Transverse colon (tissue), 4 donors: ENCODE measurements at regions of chr3 and their contacts with region 1.

Region 1: GRCh38 chr3:129934234-129935123 is 40.0 kb upstream of the TRH start:
- DNase-seq: no peak
- H3K4me3 ChIP-seq: peak overlapping the region in 1 of 4 donors; percentile 9
- H3K27ac ChIP-seq: no peak overlapping the region
- H3K4me1 ChIP-seq: peaks cover 0 to 8% (median 2%) of the 10 kb centered on the region in 4 donors
- H3K27me3 ChIP-seq: no peaks in the 10 kb centered on the region
- CTCF ChIP-seq: peak; percentile 88 to 95 (median 92)
- EP300 ChIP-seq: no peak
- POLR2A ChIP-seq: no peak

Region 2: DNA sequence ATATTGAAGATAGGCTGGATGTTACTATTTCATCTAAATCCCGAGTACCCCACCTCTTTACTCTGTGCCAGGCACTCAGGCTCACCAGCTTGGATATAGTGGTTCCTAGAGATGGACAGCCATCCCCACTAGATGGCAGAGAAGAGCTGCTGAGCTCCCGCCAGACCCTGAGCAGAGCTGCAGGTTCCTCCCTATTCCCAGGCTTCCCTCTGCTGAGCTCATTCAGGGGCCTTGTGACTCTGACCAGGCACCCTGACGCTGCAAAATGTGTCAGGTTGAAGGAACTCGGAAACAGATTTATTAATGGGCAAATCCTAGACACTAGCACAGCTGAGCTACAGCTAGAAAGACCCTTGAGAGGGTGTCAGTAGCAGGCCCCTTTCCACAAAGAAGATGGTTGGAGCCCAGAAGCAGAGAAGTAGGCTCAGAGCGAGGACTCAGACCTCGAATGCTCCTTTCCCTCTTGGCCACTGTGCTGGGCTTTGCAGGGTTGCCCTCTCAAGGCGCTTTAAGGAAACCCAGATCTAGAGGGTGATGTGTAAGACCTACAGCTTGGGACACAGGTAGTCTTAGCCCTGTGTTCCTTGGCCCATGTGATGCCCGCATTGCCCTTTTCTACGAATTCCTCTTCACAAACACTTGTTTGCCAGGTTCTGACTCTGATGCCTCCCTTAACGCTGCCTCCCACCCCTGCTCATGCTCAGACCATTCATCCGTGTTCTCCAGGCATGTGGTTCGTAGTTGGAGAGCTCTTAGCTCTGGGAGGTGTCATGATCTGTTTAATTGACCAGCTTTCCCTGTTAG is 444.0 kb before region 1 on chr3:
- in situ Hi-C with region 1: loop called in 2 of 4 experiments (anchors 25 kb)
- intact Hi-C with region 1: loop called (anchors 10 kb)
- DNase-seq: peak; percentile 74
- H3K4me3 ChIP-seq: no peak overlapping the region
- H3K27ac ChIP-seq: peak overlapping the region; percentile 65 to 72 (median 69)
- H3K4me1 ChIP-seq: peaks cover 0 to 17% (median 6%) of the 10 kb centered on the region in 4 donors
- H3K27me3 ChIP-seq: no peaks in the 10 kb centered on the region
- CTCF ChIP-seq: peak; percentile 77 to 85 (median 78)
- EP300 ChIP-seq: no peak
- POLR2A ChIP-seq: no peak

Region 3: DNA sequence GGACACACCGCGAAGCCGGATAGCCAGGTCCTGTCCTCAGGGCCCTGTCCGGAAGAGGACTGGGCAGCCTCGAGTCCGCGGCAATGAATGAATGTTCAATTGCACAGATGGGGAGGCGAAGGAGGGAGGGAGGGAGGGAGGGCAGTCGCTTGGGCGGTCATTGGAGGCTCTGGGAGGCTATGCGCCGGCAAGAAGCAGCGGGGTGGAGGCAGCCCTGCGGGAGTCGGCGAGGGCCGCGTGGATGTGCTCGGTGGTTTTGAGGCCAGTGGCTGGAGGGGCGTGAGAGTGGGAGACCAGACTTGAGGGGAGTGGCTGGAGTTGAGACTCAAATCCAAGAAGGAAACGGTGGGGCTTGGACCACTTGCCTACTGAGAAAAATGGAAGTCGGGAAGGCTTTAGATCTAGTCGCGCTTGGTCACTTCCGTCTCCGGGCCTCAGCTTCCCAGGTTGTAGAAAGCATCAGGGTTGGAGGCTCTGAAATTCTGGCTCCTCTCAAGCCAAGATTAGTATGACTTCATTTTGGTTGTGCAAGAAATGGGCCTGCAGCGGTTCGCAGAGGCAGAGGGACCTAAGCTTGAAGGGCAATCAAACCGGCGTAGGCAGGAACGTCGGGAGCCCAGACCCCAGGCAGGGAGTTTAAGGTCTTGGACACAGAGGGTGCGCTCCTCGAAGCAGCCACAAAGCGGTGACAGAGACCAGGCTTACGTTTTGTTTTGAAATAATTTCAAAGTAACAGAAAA is 306.9 kb before region 1 on chr3:
- in situ Hi-C with region 1: loop called in 3 of 4 experiments (anchors 5 to 25 kb)
- intact Hi-C with region 1: loop called (anchors 10 kb)
- DNase-seq: peak; percentile 75
- H3K4me3 ChIP-seq: peak overlapping the region; percentile 50 to 77 (median 70)
- H3K27ac ChIP-seq: peak overlapping the region; percentile 95 to 100 (median 99)
- H3K4me1 ChIP-seq: peaks cover 28 to 58% (median 44%) of the 10 kb centered on the region in 4 donors
- H3K27me3 ChIP-seq: no peaks in the 10 kb centered on the region
- CTCF ChIP-seq: peak; percentile 68 to 90 (median 77)
- EP300 ChIP-seq: no peak
- POLR2A ChIP-seq: peak; percentile 13

Region 4: DNA sequence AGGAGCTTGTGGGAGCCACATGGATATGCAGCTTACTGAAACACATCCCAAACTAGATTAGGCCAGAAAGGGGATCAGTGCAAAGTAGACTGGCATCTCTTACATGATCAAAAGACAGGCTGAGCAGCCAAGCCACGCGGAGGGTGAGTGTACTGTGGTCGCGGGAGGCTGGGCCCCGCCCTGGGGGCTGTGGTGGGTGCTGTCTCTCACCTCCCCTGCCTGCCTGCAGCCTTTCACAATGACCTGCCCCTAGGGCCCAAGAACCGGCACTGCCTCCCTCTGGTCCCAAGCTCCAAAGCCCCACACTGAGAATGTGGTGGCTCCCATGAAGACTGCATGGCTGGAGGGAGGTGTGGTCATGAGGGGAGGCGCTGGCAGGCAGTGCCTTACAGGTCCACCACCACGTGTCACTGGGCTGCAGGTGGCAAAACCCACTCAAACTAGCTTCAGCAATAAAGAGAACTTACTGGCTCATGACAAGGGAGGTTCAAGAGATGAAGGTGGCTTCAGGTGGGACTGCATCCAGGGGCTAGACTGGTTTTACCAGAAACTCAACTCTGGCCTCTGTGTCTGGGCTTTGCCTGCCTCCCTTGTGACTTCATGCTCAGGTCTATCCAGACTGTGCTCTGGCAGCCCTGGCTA is 300.6 kb before region 1 on chr3:
- in situ Hi-C with region 1: loop called in 3 of 4 experiments (anchors 5 to 25 kb)
- intact Hi-C with region 1: loop called (anchors 10 kb)
- DNase-seq: no peak
- H3K4me3 ChIP-seq: no peak overlapping the region
- H3K27ac ChIP-seq: no peak overlapping the region
- H3K4me1 ChIP-seq: no peaks in the 10 kb centered on the region
- H3K27me3 ChIP-seq: no peaks in the 10 kb centered on the region
- CTCF ChIP-seq: no peak
- EP300 ChIP-seq: no peak
- POLR2A ChIP-seq: no peak

Region 5: GRCh38 chr3:129650256-129650872 is 284.1 kb before region 1 on chr3:
- in situ Hi-C with region 1: loop called in 3 of 4 experiments (anchors 10 to 25 kb)
- intact Hi-C with region 1: loop called (anchors 10 kb)
- DNase-seq: peak; percentile 69
- H3K4me3 ChIP-seq: no peak overlapping the region
- H3K27ac ChIP-seq: no peak overlapping the region
- H3K4me1 ChIP-seq: peaks cover 0 to 4% (median 0%) of the 10 kb centered on the region in 4 donors
- H3K27me3 ChIP-seq: no peaks in the 10 kb centered on the region
- CTCF ChIP-seq: peak; percentile 58 to 70 (median 59)
- EP300 ChIP-seq: no peak
- POLR2A ChIP-seq: no peak

Region 6: DNA sequence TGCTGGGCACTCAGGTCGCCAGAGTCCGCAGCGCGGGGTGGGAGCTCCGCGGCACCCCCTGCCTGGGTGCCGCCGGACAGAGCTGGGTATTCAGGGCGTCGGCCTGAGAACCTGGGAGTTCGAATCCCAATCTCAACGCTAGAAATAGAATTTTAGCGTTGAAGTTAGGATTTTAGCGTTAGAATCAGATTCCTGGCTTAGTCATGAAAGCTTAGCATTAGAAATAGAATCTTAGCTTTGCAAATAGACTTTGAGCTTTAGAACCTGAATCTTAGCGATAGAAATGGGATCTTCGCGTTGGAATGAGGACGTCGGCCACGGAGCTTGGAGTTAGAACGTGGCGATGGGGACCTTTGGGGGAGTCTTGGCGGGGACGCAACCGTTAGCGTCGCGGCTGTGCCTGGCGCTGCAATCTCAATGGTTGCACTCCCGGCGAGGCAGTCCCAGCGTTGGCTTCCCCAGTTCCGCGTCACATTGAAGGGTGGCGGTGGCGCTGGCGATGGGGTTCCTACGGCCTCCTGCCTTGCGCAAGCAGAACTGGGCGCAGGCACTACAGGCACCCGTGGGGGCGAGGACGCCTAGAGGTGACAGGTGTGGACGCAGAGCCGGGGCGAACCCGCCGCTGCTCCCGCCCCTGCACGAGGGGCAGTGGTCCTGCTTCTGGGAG is 40.7 kb after region 1 on chr3:
- in situ Hi-C with region 1: no loop called
- intact Hi-C with region 1: loop called (anchors 1 kb)
- DNase-seq: peak; percentile 10
- H3K4me3 ChIP-seq: peak overlapping the region in 2 of 4 donors; percentile 14 to 34
- H3K27ac ChIP-seq: no peak overlapping the region
- H3K4me1 ChIP-seq: peaks cover 3 to 16% (median 15%) of the 10 kb centered on the region in 4 donors
- H3K27me3 ChIP-seq: peaks cover 68% of the 10 kb centered on the region
- CTCF ChIP-seq: no peak
- EP300 ChIP-seq: no peak
- POLR2A ChIP-seq: no peak